GM13976 (cell line): ENCODE measurements at regions of chr2 and their contacts with region 1.

Region 1: GRCh38 chr2:129936334-129936934 is 43.0 kb upstream of the RAB6C start:
- DNase-seq: no peak
- CTCF ChIP-seq: peak; percentile 22

Region 2: DNA sequence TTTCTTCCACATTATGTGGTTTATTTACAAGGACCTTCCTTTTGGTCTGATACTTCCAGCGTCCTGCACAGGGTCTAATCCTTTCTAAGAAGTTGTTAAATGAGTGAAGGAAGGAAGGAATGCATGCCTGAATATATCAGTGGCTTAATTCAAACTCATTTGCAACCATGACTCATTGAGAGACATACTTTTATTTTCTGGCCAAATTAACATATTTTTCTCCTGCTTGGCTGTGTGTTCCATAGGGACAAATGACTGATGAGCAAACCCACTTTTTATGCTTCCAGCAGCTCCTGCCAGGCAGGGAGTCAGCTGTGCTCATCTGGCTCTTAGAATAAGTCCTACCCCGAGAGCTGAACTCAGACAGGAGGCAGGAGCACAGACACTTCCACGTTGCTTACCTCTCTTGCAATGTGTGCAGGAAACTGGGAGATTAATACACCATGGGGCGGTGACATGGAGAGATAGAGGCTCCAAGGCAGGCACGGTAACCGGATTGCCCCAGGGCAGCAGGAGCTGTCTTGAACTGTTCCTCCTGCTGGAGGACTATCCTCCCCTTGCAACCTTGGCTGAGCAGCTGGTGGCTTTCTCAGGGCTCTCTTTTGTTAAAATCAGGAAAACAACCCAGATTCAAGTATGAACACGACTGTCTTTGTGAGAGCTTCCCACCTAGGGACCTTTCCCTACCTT is 950.3 kb before region 1 on chr2:
- in situ Hi-C with region 1: no loop called
- DNase-seq: no peak
- CTCF ChIP-seq: no peak

Region 3: DNA sequence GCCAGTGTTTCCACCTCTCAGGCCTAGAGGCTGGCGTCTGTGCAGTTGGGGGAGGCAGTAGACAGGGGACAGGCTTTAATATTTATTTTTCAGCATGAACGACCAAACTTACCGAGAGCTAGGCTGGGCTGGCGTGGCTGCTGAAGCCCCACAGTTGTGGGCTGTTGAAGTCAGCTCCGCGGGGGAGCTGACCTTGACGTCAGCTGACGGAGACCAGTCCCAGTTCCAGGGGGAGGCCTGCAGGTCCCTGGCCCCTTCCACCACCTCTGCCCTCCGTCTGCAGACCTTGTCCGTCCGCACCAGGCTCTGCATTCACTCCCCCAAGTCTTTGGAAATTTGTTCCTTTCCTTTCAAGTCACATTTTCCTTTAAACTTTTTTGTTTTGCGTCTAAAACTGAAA is 295.2 kb after region 1 on chr2:
- in situ Hi-C with region 1: no loop called
- DNase-seq: no peak
- CTCF ChIP-seq: no peak

Region 4: GRCh38 chr2:130332271-130333073 is 396.0 kb after region 1 on chr2:
- in situ Hi-C with region 1: loop called (anchors 10 kb)
- DNase-seq: peak; percentile 86
- CTCF ChIP-seq: peak; percentile 85

Region 5: GRCh38 chr2:130352243-130352692 is 415.8 kb after region 1 on chr2:
- in situ Hi-C with region 1: no loop called
- DNase-seq: no peak
- CTCF ChIP-seq: no peak